ENCODE measurements at regions of chr4 and their contacts with region 1.

Region 1: DNA sequence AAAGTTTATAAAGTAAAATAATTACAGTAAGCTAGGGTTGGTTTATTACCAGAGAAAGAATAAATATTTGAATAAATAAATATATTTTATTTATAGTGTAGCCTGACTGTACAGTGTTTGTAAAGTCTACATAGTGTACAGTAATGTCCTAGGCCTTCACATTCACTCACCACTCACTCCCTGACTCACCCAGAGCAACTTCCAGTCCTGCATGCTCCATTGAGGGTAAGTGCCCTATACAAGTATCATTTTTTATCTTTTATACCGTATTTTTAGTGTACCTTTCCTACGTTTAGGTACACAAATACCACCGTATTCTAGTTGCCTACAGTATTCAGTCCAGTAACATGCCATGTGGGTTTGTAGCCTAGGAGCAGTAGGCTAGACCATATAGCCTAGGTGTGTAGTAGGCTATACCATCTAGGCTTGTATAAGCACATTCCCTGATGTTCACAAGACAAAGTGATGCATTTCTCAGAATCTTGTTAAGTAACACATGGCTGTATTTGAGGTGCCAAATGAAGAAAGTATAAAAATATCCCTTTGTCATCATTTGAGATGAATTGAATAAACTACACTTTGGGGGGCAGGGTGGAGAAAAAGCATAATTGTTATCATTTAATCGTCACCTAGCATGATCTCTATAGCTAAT is 14.7 kb upstream of the KLHL8 start:
- DNase-seq: no peak
- H3K4me3 Mint-ChIP-seq: peak overlapping the region; percentile 74
- H3K27ac Mint-ChIP-seq: peak overlapping the region; percentile 79
- H3K4me1 Mint-ChIP-seq: peaks cover 6% of the 10 kb centered on the region
- H3K27me3 Mint-ChIP-seq: no peaks in the 10 kb centered on the region
- CTCF ChIP-seq: no peak

Region 2: DNA sequence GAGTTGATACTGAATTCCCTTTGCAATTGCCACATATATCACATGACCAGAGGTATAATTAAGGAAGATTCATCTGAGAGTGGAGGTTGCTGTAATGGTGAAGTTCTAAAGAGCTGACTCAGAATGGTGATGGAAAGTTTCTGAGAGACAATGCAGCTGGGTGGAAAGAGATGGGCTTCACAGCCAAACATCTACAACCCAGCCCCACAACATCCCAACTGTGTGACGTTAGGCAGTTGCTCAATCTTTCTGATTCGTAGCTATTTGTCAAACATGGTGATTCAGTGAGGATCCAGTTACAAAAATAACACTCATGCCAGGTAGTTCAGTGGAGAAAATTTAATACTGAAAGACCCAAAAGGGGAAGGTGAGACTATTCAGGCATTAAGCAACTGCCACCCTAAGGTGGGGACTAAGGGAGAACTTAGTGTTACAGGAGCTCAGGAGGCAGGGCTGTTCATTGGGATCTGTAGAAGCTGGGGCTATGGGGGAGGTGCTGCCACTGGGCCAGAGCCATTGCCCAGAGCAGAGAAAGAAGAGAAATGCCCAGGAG is 307.2 kb before region 1 on chr4:
- CTCF ChIA-PET with region 1: interaction called, 20 read pairs
- POLR2A ChIA-PET with region 1: no interaction called
- intact Hi-C with region 1: loop called (anchors 5 kb)
- DNase-seq: peak; percentile 99
- H3K4me3 Mint-ChIP-seq: peak overlapping the region; percentile 32
- H3K27ac Mint-ChIP-seq: peak overlapping the region; percentile 88
- H3K4me1 Mint-ChIP-seq: peaks cover 45% of the 10 kb centered on the region
- H3K27me3 Mint-ChIP-seq: no peaks in the 10 kb centered on the region
- CTCF ChIP-seq: no peak

Region 3: GRCh38 chr4:87150498-87151261 is 84.5 kb before region 1 on chr4:
- CTCF ChIA-PET with region 1: interaction called, 76 read pairs
- POLR2A ChIA-PET with region 1: interaction called, 15 read pairs
- intact Hi-C with region 1: loop called (anchors 1 kb)
- DNase-seq: peak; percentile 85
- H3K4me3 Mint-ChIP-seq: no peak overlapping the region
- H3K27ac Mint-ChIP-seq: no peak overlapping the region
- H3K4me1 Mint-ChIP-seq: peaks cover 11% of the 10 kb centered on the region
- H3K27me3 Mint-ChIP-seq: no peaks in the 10 kb centered on the region
- CTCF ChIP-seq: peak; percentile 81

Region 4: GRCh38 chr4:87209696-87210095 is 25.4 kb before region 1 on chr4:
- CTCF ChIA-PET with region 1: interaction called, 11 read pairs
- POLR2A ChIA-PET with region 1: interaction called, 4 read pairs
- intact Hi-C with region 1: no loop called
- DNase-seq: peak; percentile 63
- H3K4me3 Mint-ChIP-seq: no peak overlapping the region
- H3K27ac Mint-ChIP-seq: no peak overlapping the region
- H3K4me1 Mint-ChIP-seq: peaks cover 12% of the 10 kb centered on the region
- H3K27me3 Mint-ChIP-seq: no peaks in the 10 kb centered on the region
- CTCF ChIP-seq: no peak

Region 5: DNA sequence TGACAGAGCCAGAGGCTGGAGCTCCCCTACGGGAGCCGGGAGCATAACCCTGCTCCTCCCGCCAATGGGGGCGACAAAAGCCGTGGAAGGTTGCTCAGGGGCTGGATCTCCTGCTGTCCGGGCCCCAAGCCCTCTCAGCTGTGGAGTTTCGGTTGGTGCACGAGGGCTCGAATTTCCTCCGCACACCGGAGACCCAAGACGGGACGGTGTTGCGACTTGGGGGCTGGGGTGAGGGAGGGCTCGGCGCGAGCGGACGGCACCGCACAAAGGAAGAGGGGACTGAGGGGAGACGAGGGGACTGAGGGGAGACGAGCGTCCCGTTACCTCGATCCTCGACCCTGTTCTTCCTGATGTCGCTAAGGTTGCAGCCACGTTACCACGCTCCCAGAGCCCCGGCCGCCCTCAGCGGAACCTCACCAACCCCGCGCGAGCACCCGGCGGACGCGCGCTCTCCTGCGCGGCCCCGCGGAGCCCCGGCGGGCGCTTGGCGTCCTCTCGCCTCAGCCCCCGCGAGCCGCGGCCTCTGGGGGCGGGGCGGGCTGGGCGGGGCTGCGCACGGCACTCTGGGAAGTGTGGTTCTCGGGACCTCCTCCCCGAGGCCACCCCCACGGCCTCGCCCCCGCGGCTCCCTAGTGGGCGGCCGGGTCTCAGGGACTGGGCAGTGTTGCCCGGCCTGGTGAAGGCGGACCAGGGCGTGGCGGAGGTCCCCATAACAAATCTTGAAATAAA is 14.9 kb before region 1 on chr4 and contains the start of gene KLHL8:
- CTCF ChIA-PET with region 1: interaction called, 4 read pairs
- POLR2A ChIA-PET with region 1: interaction called, 13 read pairs
- intact Hi-C with region 1: no loop called
- DNase-seq: peak; percentile 91
- H3K4me3 Mint-ChIP-seq: peak within 1 kb of the TSS; percentile 91
- H3K27ac Mint-ChIP-seq: peak within 1 kb of the TSS; percentile 81
- H3K4me1 Mint-ChIP-seq: peaks cover 5% of the 10 kb centered on the region
- H3K27me3 Mint-ChIP-seq: no peaks in the 10 kb centered on the region
- CTCF ChIP-seq: peak; percentile 0
- total RNA-seq, gene KLHL8: 12.9 and 14.9 TPM in 2 replicates

Measured in MCF 10A (cell line).